ENCODE measurements at regions of chr17 and their contacts with region 1.

Region 1: DNA sequence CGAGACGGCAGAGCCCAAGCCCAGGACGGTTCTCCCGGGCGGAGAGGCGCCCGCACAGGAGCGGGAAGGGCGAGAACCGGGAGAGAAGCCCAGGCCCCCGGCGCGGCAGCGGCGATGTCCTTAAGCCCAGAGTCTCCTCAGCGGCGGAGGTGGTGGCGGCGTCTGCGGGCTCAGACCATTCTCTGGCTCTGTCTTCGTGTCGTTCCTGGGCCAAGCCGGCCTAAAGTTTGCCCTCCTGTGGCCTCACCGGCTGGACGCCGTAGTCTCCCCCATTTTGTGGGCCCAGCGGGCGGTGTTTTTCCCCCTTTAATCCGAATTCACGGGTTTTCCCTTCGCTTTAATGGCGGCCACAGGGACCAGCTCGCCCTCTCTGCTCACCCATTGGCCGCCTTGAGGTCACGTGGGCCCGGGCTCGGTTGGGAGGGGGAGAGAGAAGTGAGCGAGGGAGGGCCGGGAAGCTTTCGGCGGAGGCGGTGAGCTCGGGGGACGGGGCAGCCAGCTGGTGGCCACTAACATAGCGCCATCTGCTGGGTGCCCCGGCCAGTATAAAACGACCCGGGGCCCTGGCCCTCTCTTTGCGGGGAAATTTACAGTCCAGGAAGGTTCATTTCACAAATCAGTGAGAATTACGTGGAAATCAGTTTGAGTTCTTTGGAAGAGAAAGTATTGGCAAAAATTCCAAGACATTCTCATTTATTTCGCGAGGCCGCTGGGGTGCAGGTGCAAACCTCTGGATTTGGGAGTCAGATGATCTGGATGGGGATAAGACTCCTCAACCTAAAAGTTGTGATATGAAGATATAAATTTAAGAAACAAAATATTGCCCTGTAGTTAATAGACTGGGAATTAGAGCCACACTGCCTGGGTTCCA is 755 bp upstream of the MED13 start:
- DNase-seq: peak; percentile 99
- H3K4me3 ChIP-seq: peak overlapping the region; percentile 75
- H3K4me3 Mint-ChIP-seq: peak overlapping the region; percentile 91
- H3K27ac Mint-ChIP-seq: peak overlapping the region; percentile 98
- H3K4me1 ChIP-seq: peaks cover 16% of the 10 kb centered on the region
- H3K4me1 Mint-ChIP-seq: peaks cover 26% of the 10 kb centered on the region
- H3K27me3 ChIP-seq: no peaks in the 10 kb centered on the region
- H3K27me3 Mint-ChIP-seq: no peaks in the 10 kb centered on the region
- CTCF ChIP-seq: peak; percentile 93

Region 2: GRCh38 chr17:61635913-61636432 is 429.9 kb before region 1 on chr17:
- CTCF ChIA-PET with region 1: no interaction called
- POLR2A ChIA-PET with region 1: no interaction called
- intact Hi-C with region 1: loop called (anchors 1 kb)
- DNase-seq: peak; percentile 55 to 67
- H3K4me3 ChIP-seq: no peak overlapping the region
- H3K4me3 Mint-ChIP-seq: no peak overlapping the region
- H3K27ac Mint-ChIP-seq: no peak overlapping the region
- H3K4me1 ChIP-seq: no peaks in the 10 kb centered on the region
- H3K4me1 Mint-ChIP-seq: no peaks in the 10 kb centered on the region
- H3K27me3 ChIP-seq: no peaks in the 10 kb centered on the region
- H3K27me3 Mint-ChIP-seq: peaks cover 29% of the 10 kb centered on the region
- CTCF ChIP-seq: peak; percentile 82 to 86

Region 3: GRCh38 chr17:61862975-61863800 is 202.6 kb before region 1 on chr17 and contains the start of gene BRIP1:
- CTCF ChIA-PET with region 1: interaction called, 10 read pairs
- POLR2A ChIA-PET with region 1: interaction called, 7 read pairs
- intact Hi-C with region 1: no loop called
- DNase-seq: peak; percentile 95 to 97
- H3K4me3 ChIP-seq: peak within 1 kb of the TSS; percentile 76
- H3K4me3 Mint-ChIP-seq: peak within 1 kb of the TSS; percentile 97
- H3K27ac Mint-ChIP-seq: peak within 1 kb of the TSS; percentile 97
- H3K4me1 ChIP-seq: peaks cover 20% of the 10 kb centered on the region
- H3K4me1 Mint-ChIP-seq: peaks cover 11% of the 10 kb centered on the region
- H3K27me3 ChIP-seq: no peaks in the 10 kb centered on the region
- H3K27me3 Mint-ChIP-seq: no peaks in the 10 kb centered on the region
- CTCF ChIP-seq: no peak
- total RNA-seq, gene BRIP1: 17.3 and 18.3 TPM in 2 replicates

Region 4: GRCh38 chr17:62014526-62014925 is 51.3 kb before region 1 on chr17:
- CTCF ChIA-PET with region 1: no interaction called
- POLR2A ChIA-PET with region 1: no interaction called
- intact Hi-C with region 1: no loop called
- DNase-seq: no peak
- H3K4me3 ChIP-seq: no peak overlapping the region
- H3K4me3 Mint-ChIP-seq: no peak overlapping the region
- H3K27ac Mint-ChIP-seq: no peak overlapping the region
- H3K4me1 ChIP-seq: no peaks in the 10 kb centered on the region
- H3K4me1 Mint-ChIP-seq: no peaks in the 10 kb centered on the region
- H3K27me3 ChIP-seq: no peaks in the 10 kb centered on the region
- H3K27me3 Mint-ChIP-seq: no peaks in the 10 kb centered on the region
- CTCF ChIP-seq: no peak

Measured in Caco-2 (cell line).